ENCODE measurements at regions of chrX and their contacts with region 1.

Region 1: GRCh38 chrX:31423609-31424189 is 351.9 kb upstream of the FTHL17 start:
- DNase-seq: peak; percentile 5 to 50
- H3K4me3 ChIP-seq: no peak overlapping the region
- H3K27ac ChIP-seq: no peak overlapping the region
- H3K4me1 ChIP-seq: no peaks in the 10 kb centered on the region
- H3K27me3 ChIP-seq: no peaks in the 10 kb centered on the region
- CTCF ChIP-seq: peak in 2 of 3 experiments; percentile 28 to 33; a peak in 2 of 4 replicates
- EP300 ChIP-seq: no peak
- POLR2A ChIP-seq: no peak
- RAD21 ChIP-seq: peak; percentile 50 to 64

Region 2: DNA sequence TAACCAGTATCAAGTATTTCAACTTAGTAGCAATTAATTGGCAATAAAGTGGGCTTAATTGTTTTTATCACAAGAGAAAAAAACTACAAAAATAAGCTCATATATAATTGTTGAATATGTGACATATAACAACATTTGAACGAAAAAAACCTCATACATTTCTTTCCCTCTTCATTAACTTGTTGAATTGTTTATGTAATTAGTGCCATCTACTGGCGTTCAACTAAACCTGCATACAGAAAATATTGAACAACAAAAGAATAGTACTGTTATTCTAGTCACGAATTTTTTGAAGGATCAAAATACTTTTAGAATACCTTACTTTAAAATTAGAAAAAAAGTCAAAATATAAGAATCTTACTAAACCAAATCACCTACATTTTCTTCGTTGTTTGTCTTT is 234.7 kb after region 1 on chrX:
- CTCF ChIA-PET with region 1: interaction called, 10 read pairs
- POLR2A ChIA-PET with region 1: no interaction called
- DNase-seq: no peak
- H3K4me3 ChIP-seq: no peak overlapping the region
- H3K27ac ChIP-seq: no peak overlapping the region
- H3K4me1 ChIP-seq: no peaks in the 10 kb centered on the region
- H3K27me3 ChIP-seq: no peaks in the 10 kb centered on the region
- CTCF ChIP-seq: peak in 1 of 3 experiments; percentile 15; a peak in 1 of 4 replicates
- EP300 ChIP-seq: no peak
- POLR2A ChIP-seq: no peak
- RAD21 ChIP-seq: peak in 1 of 2 experiments; percentile 50; a peak in 3 of 4 replicates

Measured in H1 (cell line).